ENCODE measurements at regions of chr7 and their contacts with region 1.

Region 1: DNA sequence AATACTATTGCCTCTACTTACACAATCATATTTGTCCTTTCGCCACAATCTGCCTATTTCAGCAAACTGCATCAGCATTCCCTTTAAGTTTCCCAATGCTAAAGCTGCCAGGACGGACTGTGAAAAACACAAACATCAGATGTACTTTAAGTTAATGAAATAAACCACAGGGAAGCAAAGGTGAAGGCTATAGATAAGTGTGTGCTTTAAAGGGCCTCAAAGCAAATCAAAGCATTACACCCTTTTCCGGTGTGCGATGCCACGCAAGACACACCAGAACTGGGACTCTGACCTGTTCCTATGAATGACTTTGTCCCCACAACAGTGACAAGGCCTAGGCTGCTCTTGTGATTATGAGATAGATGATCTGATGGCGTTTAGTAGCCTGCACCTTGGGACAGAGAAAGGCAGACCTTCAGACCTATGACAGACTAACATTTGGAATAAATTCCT is 23.4 kb downstream of the SLC26A3 start:
- DNase-seq: no peak
- ATAC-seq: no peak
- H3K4me3 ChIP-seq: no peak overlapping the region
- H3K27ac ChIP-seq: no peak overlapping the region
- H3K4me1 ChIP-seq: no peaks in the 10 kb centered on the region
- H3K27me3 ChIP-seq: no peaks in the 10 kb centered on the region
- CTCF ChIP-seq: no peak
- EP300 ChIP-seq: no peak
- POLR2A ChIP-seq: no peak
- RAD21 ChIP-seq: no peak

Region 2: GRCh38 chr7:107700570-107700969 is 79.1 kb before region 1 on chr7:
- CTCF ChIA-PET with region 1: no interaction called
- POLR2A ChIA-PET with region 1: no interaction called
- RAD21 ChIA-PET with region 1: no interaction called
- SMC1A ChIA-PET with region 1: no interaction called
- in situ Hi-C with region 1: no loop called
- intact Hi-C with region 1: no loop called
- DNase-seq: no peak
- ATAC-seq: no peak
- H3K4me3 ChIP-seq: no peak overlapping the region
- H3K27ac ChIP-seq: no peak overlapping the region
- H3K4me1 ChIP-seq: no peaks in the 10 kb centered on the region
- H3K27me3 ChIP-seq: peaks cover 2% of the 10 kb centered on the region in 2 experiments; a peak in 3 of 4 replicates
- CTCF ChIP-seq: no peak
- EP300 ChIP-seq: no peak
- POLR2A ChIP-seq: no peak
- RAD21 ChIP-seq: no peak

Region 3: DNA sequence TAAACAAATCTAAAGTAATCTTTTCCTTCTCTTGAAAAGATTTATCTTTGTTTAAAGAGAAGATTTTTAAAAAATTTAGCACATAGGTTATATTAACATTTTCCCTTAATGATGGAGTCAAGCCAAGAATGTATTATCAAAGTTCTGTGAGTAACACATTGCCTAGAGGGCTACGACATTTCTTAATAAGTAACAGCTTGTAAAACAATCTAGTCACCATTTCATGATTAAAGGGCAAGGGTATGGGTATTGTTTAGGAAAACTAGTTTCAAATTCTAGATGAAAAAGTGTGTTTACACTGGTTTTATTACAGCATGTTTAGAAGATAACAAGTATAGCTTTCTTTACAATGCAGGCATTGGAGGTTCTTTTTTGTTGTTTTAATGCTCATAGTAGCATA is 379.1 kb after region 1 on chr7:
- CTCF ChIA-PET with region 1: no interaction called
- POLR2A ChIA-PET with region 1: no interaction called
- RAD21 ChIA-PET with region 1: no interaction called
- SMC1A ChIA-PET with region 1: no interaction called
- in situ Hi-C with region 1: no loop called
- intact Hi-C with region 1: loop called (anchors 5 kb)
- DNase-seq: no peak
- ATAC-seq: no peak
- H3K4me3 ChIP-seq: no peak overlapping the region
- H3K27ac ChIP-seq: no peak overlapping the region
- H3K4me1 ChIP-seq: no peaks in the 10 kb centered on the region
- H3K27me3 ChIP-seq: no peaks in the 10 kb centered on the region; a peak in 2 of 4 replicates
- CTCF ChIP-seq: no peak
- EP300 ChIP-seq: no peak
- POLR2A ChIP-seq: no peak
- RAD21 ChIP-seq: no peak

Measured in GM12878 (cell line).